H1 (cell line): ENCODE measurements at regions of chr10 and their contacts with region 1.

Region 1: GRCh38 chr10:119715628-119716505 is 10.0 kb upstream of the INPP5F start:
- DNase-seq: no peak
- H3K4me3 ChIP-seq: no peak overlapping the region
- H3K27ac ChIP-seq: no peak overlapping the region
- H3K4me1 ChIP-seq: peaks cover 0 to 2% (median 0%) of the 10 kb centered on the region in 4 experiments; a peak in 2 of 7 replicates
- H3K27me3 ChIP-seq: no peaks in the 10 kb centered on the region
- CTCF ChIP-seq: no peak
- EP300 ChIP-seq: no peak
- POLR2A ChIP-seq: no peak
- RAD21 ChIP-seq: no peak

Region 2: DNA sequence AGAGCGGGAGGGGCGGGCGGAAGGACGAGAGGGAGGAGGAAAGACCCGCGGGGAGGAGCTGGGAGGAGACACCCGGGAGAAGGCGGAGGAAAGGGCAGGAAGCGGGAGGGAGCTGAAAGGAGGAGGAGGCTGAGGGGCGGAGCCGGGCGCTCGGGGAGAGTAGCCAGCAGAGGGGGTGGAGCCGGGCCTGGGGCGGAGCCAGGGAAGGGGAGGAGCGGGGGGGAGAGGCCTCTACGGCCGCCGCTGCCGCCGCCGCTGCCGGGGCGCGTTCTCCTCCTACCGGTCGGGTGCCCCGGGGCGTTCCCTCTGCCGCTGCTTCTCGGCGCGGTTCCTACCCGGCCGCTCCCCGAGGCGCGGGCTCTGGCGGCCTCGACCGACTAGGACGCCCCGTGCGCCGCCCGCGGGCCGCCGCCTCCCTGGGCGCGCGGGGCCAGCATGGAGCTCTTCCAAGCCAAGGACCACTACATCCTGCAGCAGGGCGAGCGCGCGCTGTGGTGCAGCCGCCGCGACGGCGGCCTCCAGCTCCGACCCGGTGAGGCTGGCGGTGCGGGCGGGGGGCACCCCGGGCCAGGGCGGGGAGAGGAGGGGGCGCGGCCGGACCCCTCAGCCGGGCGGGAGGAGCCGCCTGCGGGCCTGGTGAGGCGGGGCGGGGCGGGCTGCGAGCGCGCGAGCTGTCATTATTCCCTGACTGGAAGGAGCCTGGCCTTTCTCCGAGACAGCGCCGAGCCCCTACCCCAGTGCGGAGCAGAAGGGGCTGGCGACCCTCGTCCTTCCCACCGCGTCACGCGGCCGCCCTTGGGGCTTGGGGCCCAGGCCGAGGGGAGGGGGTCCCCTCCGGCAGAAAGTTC is 10.2 kb after region 1 on chr10 and contains the start of gene INPP5F:
- CTCF ChIA-PET with region 1: interaction called, 7 read pairs
- POLR2A ChIA-PET with region 1: interaction called, 11 read pairs
- DNase-seq: peak; percentile 92 to 99
- H3K4me3 ChIP-seq: peak within 1 kb of the TSS; percentile 67 to 99 (median 82)
- H3K27ac ChIP-seq: peak within 1 kb of the TSS; percentile 60; the same call in 1 of the 2 replicates
- H3K4me1 ChIP-seq: peaks cover 4 to 13% (median 8%) of the 10 kb centered on the region in 4 experiments; a peak in 5 of 7 replicates
- H3K27me3 ChIP-seq: no peaks in the 10 kb centered on the region
- CTCF ChIP-seq: no peak
- EP300 ChIP-seq: no peak; a peak in 1 of 3 replicates
- POLR2A ChIP-seq: peak in 1 of 2 experiments; percentile 61; a peak in 2 of 3 replicates
- RAD21 ChIP-seq: 0 out of 4 replicates have a peak, but pooled peaks of 1 of the 2 experiments have one; percentile 1
- total RNA-seq, gene INPP5F: 97.9 and 101 TPM in 2 replicates

Region 3: DNA sequence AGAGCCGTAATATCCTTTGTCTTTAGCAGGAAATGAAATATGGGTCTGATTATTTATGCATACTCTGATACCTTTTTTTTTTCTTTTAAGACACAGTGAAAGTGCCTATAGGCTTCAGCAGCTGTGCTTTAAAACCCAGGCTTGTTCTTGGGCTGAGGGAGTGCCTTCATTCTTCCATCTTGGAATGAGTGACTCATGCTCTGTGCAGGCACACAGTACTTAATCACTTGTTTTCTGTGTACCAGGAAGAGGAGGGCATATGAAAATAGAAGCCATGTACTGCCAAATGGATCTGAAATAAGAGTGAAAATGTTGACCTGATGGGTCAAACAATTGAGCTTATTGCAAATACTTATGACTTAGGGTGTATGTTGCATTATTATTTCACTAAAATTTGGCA is 22.0 kb after region 1 on chr10:
- CTCF ChIA-PET with region 1: no interaction called
- POLR2A ChIA-PET with region 1: no interaction called
- DNase-seq: no peak
- H3K4me3 ChIP-seq: no peak overlapping the region
- H3K27ac ChIP-seq: no peak overlapping the region
- H3K4me1 ChIP-seq: peaks cover 0 to 15% (median 6%) of the 10 kb centered on the region in 4 experiments; a peak in 3 of 7 replicates
- H3K27me3 ChIP-seq: no peaks in the 10 kb centered on the region
- CTCF ChIP-seq: no peak
- EP300 ChIP-seq: no peak
- POLR2A ChIP-seq: no peak
- RAD21 ChIP-seq: no peak